ENCODE measurements at regions of chr3 and their contacts with region 1.

Region 1: GRCh38 chr3:172256101-172256734 is 192.0 kb downstream of the GHSR start:
- DNase-seq: peak; percentile 50 to 80 (median 60)
- H3K4me3 ChIP-seq: no peak overlapping the region
- H3K27ac ChIP-seq: peak overlapping the region; percentile 56 to 82
- H3K4me1 ChIP-seq: peaks cover 28% of the 10 kb centered on the region
- H3K27me3 ChIP-seq: no peaks in the 10 kb centered on the region
- CTCF ChIP-seq: no peak
- EP300 ChIP-seq: no peak
- POLR2A ChIP-seq: no peak

Region 2: GRCh38 chr3:172317984-172318383 is 61.8 kb after region 1 on chr3:
- intact Hi-C with region 1: loop called in 1 of 4 experiments (anchors 10 kb)
- DNase-seq: peak in 4 of 5 donors; percentile 34 to 66 (median 56)
- H3K4me3 ChIP-seq: no peak overlapping the region
- H3K27ac ChIP-seq: peak overlapping the region in 1 of 2 donors; percentile 14
- H3K4me1 ChIP-seq: peaks cover 30% of the 10 kb centered on the region
- H3K27me3 ChIP-seq: no peaks in the 10 kb centered on the region
- CTCF ChIP-seq: no peak
- EP300 ChIP-seq: peak; percentile 8
- POLR2A ChIP-seq: no peak